B cell (primary cell): ENCODE measurements at regions of chr12 and their contacts with region 1.

Region 1: DNA sequence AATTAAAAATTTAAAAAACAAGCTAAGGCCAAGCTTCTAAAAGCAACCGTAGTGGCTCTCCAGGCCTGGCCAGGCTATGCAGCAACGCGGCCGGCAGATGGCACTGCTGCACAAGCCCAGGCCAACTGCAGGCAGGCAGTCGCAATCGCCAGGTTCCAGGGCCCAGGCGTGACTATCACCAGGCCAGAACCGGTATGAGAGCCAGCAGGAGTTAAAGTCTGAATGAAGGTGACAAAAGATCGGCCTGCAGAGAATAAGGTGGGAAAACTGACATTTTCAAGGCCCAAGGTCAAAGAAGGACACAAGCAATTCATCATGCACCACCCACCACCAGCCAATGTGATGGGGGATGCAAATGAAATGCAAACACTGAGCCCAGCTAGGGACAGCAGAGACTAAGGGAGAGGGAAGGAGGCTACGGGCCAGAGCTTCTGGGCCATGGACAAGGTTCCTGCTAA is 43.6 kb upstream of the ANO2 start:
- DNase-seq: peak; percentile 70
- ATAC-seq: peak; percentile 89
- H3K4me3 ChIP-seq: no peak overlapping the region
- H3K4me3 Mint-ChIP-seq: no peak overlapping the region
- H3K27ac ChIP-seq: no peak overlapping the region
- H3K27ac Mint-ChIP-seq: no peak overlapping the region
- H3K4me1 ChIP-seq: peaks cover 0 to 5% of the 10 kb centered on the region in 2 donors
- H3K4me1 Mint-ChIP-seq: peaks cover 3% of the 10 kb centered on the region
- H3K27me3 ChIP-seq: peaks cover 0 to 3% (median 1%) of the 10 kb centered on the region in 4 experiments
- H3K27me3 Mint-ChIP-seq: no peaks in the 10 kb centered on the region
- CTCF ChIP-seq: peak; percentile 95

Region 2: GRCh38 chr12:5022465-5023061 is 966.1 kb before region 1 on chr12:
- CTCF ChIA-PET with region 1: no interaction called
- POLR2A ChIA-PET with region 1: no interaction called
- intact Hi-C with region 1: no loop called
- DNase-seq: peak; percentile 78
- ATAC-seq: peak; percentile 60
- H3K4me3 ChIP-seq: no peak overlapping the region
- H3K4me3 Mint-ChIP-seq: no peak overlapping the region
- H3K27ac ChIP-seq: no peak overlapping the region
- H3K27ac Mint-ChIP-seq: no peak overlapping the region
- H3K4me1 ChIP-seq: no peaks in the 10 kb centered on the region
- H3K4me1 Mint-ChIP-seq: no peaks in the 10 kb centered on the region
- H3K27me3 ChIP-seq: peaks cover 0 to 5% (median 1%) of the 10 kb centered on the region in 4 experiments
- H3K27me3 Mint-ChIP-seq: peaks cover 49% of the 10 kb centered on the region
- CTCF ChIP-seq: peak; percentile 97

Region 3: GRCh38 chr12:5499566-5500330 is 488.9 kb before region 1 on chr12:
- CTCF ChIA-PET with region 1: no interaction called
- POLR2A ChIA-PET with region 1: no interaction called
- intact Hi-C with region 1: no loop called
- DNase-seq: no peak
- ATAC-seq: no peak
- H3K4me3 ChIP-seq: no peak overlapping the region
- H3K4me3 Mint-ChIP-seq: no peak overlapping the region
- H3K27ac ChIP-seq: no peak overlapping the region
- H3K27ac Mint-ChIP-seq: no peak overlapping the region
- H3K4me1 ChIP-seq: no peaks in the 10 kb centered on the region
- H3K4me1 Mint-ChIP-seq: no peaks in the 10 kb centered on the region
- H3K27me3 ChIP-seq: peaks cover 0 to 4% (median 0%) of the 10 kb centered on the region in 4 experiments
- H3K27me3 Mint-ChIP-seq: peaks cover 14% of the 10 kb centered on the region
- CTCF ChIP-seq: no peak

Region 4: GRCh38 chr12:6033546-6033945 is 44.9 kb after region 1 on chr12:
- CTCF ChIA-PET with region 1: interaction called, 96 read pairs
- POLR2A ChIA-PET with region 1: no interaction called
- intact Hi-C with region 1: no loop called
- DNase-seq: no peak
- ATAC-seq: no peak
- H3K4me3 ChIP-seq: no peak overlapping the region
- H3K4me3 Mint-ChIP-seq: no peak overlapping the region
- H3K27ac ChIP-seq: no peak overlapping the region
- H3K27ac Mint-ChIP-seq: no peak overlapping the region
- H3K4me1 ChIP-seq: no peaks in the 10 kb centered on the region
- H3K4me1 Mint-ChIP-seq: no peaks in the 10 kb centered on the region
- H3K27me3 ChIP-seq: no peaks in the 10 kb centered on the region
- H3K27me3 Mint-ChIP-seq: peaks cover 5% of the 10 kb centered on the region
- CTCF ChIP-seq: no peak

Region 5: DNA sequence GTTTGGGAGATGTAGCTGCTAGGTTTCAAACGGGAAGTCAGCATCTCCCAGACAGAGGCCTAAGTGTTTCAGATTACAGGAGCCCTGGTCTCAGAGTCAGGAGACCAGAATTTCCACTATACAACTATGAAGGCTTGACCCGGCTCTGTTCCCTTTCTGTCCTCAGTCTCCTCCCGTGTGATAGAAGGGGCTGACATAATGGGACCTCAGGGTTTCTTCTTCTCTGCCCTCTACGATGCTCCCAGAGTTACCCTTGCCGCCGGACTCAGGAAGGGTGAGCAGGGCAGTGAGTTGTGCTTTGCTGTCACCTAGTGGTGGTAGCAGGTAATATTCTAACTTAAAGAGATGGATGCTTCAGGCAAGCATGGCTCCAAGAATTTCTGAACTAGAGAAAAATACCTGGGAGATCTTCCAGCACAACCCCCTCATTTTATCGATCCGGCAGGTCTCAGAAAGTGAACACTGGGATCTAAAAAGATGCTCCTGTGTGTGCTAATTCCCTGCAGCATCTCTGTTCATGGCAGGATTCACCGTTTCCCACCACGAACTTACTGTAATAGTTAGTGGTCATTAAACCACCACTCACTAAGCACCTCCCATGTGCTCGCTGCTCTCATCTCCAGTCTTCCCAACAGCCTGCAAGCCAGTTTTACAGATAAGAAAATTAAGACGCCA is 51.3 kb after region 1 on chr12:
- CTCF ChIA-PET with region 1: interaction called, 96 read pairs
- POLR2A ChIA-PET with region 1: no interaction called
- intact Hi-C with region 1: loop called (anchors 1 kb)
- DNase-seq: peak; percentile 70
- ATAC-seq: peak; percentile 83
- H3K4me3 ChIP-seq: peak overlapping the region in 1 of 5 experiments; percentile 21
- H3K4me3 Mint-ChIP-seq: peak overlapping the region; percentile 4
- H3K27ac ChIP-seq: no peak overlapping the region
- H3K27ac Mint-ChIP-seq: no peak overlapping the region
- H3K4me1 ChIP-seq: peaks cover 0 to 3% of the 10 kb centered on the region in 2 donors
- H3K4me1 Mint-ChIP-seq: peaks cover 2% of the 10 kb centered on the region
- H3K27me3 ChIP-seq: peaks cover 0 to 5% (median 0%) of the 10 kb centered on the region in 4 experiments
- H3K27me3 Mint-ChIP-seq: peaks cover 18% of the 10 kb centered on the region
- CTCF ChIP-seq: peak; percentile 93

Region 6: DNA sequence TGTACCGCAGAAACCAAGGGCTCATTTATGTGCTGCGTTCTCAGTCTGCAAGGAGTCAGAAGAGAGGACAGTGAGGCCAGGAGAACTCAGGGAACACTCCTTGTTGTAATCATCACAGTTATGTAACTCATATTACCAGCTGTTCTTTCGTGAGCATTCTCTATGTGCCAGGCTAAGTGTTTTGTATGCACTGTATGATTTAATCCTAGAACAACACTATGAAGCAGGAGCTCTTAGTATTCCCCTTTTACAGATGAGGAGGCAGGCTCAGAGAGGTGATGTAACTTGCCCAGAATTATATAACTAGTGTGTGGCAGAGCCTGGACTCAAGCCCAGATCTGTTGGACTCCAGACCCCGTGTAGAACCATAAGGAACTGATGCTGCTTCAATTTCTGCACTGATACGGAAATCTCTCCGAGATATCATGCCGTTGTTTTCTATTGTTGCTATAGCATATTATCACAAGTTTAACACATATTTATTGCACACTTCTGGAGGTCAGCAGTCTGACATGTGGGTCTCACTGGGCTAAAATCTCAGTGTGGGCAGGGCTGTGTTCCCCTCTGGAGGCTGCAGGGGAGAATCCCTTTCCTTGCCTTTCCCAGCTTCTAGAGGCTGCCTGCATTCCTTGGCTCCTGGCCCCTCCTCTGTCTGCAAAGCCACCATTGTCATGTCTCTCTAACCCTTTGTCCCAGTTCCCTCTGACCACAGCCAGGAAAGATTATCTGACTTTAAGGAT is 195.2 kb after region 1 on chr12:
- CTCF ChIA-PET with region 1: no interaction called
- POLR2A ChIA-PET with region 1: no interaction called
- intact Hi-C with region 1: no loop called
- DNase-seq: no peak
- ATAC-seq: no peak
- H3K4me3 ChIP-seq: no peak overlapping the region
- H3K4me3 Mint-ChIP-seq: no peak overlapping the region
- H3K27ac ChIP-seq: no peak overlapping the region
- H3K27ac Mint-ChIP-seq: no peak overlapping the region
- H3K4me1 ChIP-seq: peaks cover 1 to 2% of the 10 kb centered on the region in 2 donors
- H3K4me1 Mint-ChIP-seq: no peaks in the 10 kb centered on the region
- H3K27me3 ChIP-seq: peaks cover 0 to 26% (median under 1%) of the 10 kb centered on the region in 4 experiments
- H3K27me3 Mint-ChIP-seq: peaks cover 43% of the 10 kb centered on the region
- CTCF ChIP-seq: no peak

Region 7: DNA sequence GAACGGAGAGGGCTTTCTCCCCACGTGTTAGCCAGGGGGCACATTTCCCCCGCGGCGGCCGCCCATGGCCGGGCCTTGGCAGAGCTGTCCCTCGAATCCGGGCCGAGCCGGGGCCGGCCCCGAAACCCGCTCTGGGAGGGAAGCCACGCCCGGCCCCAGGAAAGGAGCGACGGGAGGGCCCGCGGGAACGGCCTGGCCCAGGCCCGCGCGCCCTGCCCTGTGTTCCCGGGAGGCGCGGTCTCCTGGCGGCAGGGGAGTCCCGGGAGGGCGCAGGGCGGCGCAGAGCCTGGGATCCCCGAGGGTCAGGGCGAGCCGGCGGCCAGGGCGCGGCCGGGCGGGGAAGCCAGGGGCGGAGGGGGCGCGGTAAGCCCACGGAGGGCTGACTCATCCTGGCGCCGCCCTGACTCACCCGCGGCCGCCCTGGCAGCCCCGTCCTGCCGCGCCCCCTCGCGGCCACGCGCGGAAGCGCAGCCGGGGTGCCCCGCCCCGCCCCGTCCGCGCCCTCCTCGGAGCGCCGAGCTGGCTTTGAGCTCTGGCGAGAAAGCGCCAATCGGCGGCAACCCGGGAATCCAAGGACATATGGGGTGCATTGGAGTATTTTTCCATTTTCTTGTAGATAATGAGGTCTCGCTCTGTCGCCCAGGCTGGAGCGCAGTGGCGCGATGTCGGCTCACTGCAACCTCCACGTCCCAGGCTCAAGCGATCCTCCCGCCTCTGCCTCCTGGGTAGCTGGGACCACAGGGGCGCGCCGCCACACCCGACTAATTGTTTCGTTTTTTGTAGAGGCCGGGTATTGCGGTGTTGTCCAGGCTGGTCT is 290.0 kb after region 1 on chr12:
- CTCF ChIA-PET with region 1: interaction called, 23 read pairs
- POLR2A ChIA-PET with region 1: no interaction called
- intact Hi-C with region 1: no loop called
- DNase-seq: peak; percentile 86
- ATAC-seq: peak; percentile 99
- H3K4me3 ChIP-seq: peak overlapping the region in 4 of 5 experiments; percentile 8 to 58 (median 48)
- H3K4me3 Mint-ChIP-seq: peak overlapping the region; percentile 84
- H3K27ac ChIP-seq: no peak overlapping the region
- H3K27ac Mint-ChIP-seq: peak overlapping the region; percentile 10
- H3K4me1 ChIP-seq: peaks cover 10 to 11% of the 10 kb centered on the region in 2 donors
- H3K4me1 Mint-ChIP-seq: peaks cover 6% of the 10 kb centered on the region
- H3K27me3 ChIP-seq: peaks cover 0 to 34% (median 21%) of the 10 kb centered on the region in 4 experiments
- H3K27me3 Mint-ChIP-seq: peaks cover 69% of the 10 kb centered on the region
- CTCF ChIP-seq: peak; percentile 91

Region 8: DNA sequence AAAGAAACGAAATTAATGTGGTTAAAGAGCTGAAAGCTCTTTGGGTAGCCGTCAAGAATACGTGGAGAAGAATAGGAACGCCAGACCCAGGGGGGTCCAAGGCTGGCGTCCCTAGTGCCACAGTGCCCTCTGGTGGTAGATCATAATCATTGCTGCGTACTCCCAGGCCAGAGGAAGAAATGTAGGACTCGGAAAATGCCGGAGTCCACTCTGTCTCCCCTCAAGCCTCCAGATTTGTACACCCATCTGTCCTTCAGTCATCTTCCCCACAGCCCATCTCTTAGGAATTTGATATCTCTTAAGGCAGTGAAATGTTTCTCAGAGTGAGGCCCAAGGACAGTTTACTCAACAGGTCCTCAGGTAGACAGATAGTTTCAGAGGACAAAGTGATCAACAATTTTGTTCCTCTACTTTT is 296.4 kb after region 1 on chr12:
- CTCF ChIA-PET with region 1: interaction called, 23 read pairs
- POLR2A ChIA-PET with region 1: no interaction called
- intact Hi-C with region 1: no loop called
- DNase-seq: peak; percentile 78
- ATAC-seq: peak; percentile 85
- H3K4me3 ChIP-seq: no peak overlapping the region
- H3K4me3 Mint-ChIP-seq: no peak overlapping the region
- H3K27ac ChIP-seq: no peak overlapping the region
- H3K27ac Mint-ChIP-seq: no peak overlapping the region
- H3K4me1 ChIP-seq: peaks cover 0 to 5% of the 10 kb centered on the region in 2 donors
- H3K4me1 Mint-ChIP-seq: no peaks in the 10 kb centered on the region
- H3K27me3 ChIP-seq: peaks cover 0 to 11% (median 6%) of the 10 kb centered on the region in 4 experiments
- H3K27me3 Mint-ChIP-seq: peaks cover 51% of the 10 kb centered on the region
- CTCF ChIP-seq: peak; percentile 97

Region 9: DNA sequence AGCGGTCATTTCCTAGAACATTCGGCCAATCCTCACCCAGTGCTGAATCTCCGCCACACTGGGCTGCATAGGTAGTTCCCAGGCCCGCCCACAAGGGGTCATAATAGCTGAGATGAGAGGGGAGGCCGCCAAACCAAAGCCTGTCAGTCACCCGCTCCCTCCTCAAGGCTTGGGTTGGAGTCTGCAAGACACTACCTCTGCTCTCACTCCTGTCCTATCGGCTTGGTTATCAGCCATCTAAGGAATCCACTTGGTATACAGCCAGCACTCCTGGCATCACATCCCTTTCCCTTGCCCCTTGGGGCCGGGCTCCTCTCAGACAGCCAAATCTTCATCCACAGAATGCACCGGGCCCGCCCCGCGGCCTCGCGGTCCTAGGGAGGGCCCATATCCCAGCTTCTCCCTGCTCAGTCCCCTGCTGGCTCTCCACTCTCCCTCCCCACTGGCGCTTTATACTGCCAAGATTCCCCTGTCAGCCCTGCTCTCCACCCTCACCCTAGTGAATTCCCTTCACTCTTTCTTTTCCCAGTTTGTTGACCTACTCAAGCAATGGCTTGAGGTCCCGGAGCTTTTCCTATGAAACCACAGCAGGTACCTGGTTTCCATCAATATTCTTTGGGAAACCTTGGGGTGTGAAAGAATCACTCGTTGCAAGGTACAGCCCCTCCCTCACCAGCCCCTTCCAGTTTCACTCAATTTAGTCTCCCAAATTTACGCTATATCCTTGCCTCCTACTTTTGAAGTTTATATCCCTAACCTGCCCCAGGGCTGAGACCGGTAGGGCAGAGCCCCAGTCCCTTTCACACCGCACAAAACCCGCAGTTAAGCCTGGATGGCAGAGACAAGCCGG is 565.7 kb after region 1 on chr12:
- CTCF ChIA-PET with region 1: no interaction called
- POLR2A ChIA-PET with region 1: no interaction called
- intact Hi-C with region 1: loop called (anchors 10 kb)
- DNase-seq: peak; percentile 82
- ATAC-seq: peak; percentile 70
- H3K4me3 ChIP-seq: peak overlapping the region in 4 of 5 experiments; percentile 52 to 93 (median 84)
- H3K4me3 Mint-ChIP-seq: peak overlapping the region; percentile 89
- H3K27ac ChIP-seq: no peak overlapping the region
- H3K27ac Mint-ChIP-seq: peak overlapping the region; percentile 67
- H3K4me1 ChIP-seq: peaks cover 12 to 38% of the 10 kb centered on the region in 2 donors
- H3K4me1 Mint-ChIP-seq: peaks cover 36% of the 10 kb centered on the region
- H3K27me3 ChIP-seq: no peaks in the 10 kb centered on the region
- H3K27me3 Mint-ChIP-seq: no peaks in the 10 kb centered on the region
- CTCF ChIP-seq: peak; percentile 81